Transverse colon (tissue), 4 donors: ENCODE measurements at regions of chr12 and their contacts with region 1.

Region 1: GRCh38 chr12:9079883-9080675 is 35.6 kb downstream of the A2M start:
- DNase-seq: no peak
- H3K4me3 ChIP-seq: no peak overlapping the region
- H3K27ac ChIP-seq: no peak overlapping the region
- H3K4me1 ChIP-seq: no peaks in the 10 kb centered on the region
- H3K27me3 ChIP-seq: no peaks in the 10 kb centered on the region
- CTCF ChIP-seq: no peak
- EP300 ChIP-seq: no peak
- POLR2A ChIP-seq: no peak

Region 2: DNA sequence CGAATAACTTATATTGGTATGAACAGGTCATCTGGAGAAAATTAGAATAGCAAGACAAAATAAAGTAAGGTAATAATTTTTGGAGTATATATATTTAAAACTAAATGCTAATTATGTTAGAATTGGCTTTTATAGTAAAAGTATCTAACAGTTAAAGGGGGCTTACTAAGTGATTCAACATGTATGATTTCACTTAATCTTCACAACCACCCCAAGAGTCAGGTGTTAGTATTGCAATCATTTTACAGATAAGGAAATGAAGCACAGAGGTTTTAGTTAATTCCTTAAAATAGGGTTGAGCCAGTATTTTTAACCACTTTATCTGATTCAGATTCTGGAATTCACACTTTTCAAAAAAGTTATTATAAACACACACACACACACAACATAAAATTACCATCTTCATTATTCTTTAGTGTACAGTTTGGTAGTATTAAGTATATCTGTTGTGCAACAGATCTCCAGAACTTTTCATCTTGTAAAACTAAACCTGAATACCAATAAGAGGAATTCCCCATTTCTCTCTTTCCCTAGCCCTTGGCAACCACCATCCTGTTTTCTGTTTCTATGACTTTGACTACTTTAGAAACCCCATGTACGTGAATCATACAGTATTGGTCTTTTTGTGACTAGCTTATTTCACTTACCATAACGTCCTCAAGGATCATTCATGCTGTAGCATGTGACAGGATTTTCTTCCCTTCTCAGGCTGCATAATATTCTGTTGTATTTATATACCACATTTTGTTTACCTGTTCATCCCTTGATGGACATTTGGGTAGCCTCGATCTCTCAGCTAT is 23.2 kb after region 1 on chr12:
- in situ Hi-C with region 1: no loop called
- intact Hi-C with region 1: loop called (anchors 1 kb)
- DNase-seq: no peak
- H3K4me3 ChIP-seq: no peak overlapping the region
- H3K27ac ChIP-seq: no peak overlapping the region
- H3K4me1 ChIP-seq: no peaks in the 10 kb centered on the region
- H3K27me3 ChIP-seq: no peaks in the 10 kb centered on the region
- CTCF ChIP-seq: no peak
- EP300 ChIP-seq: no peak
- POLR2A ChIP-seq: no peak

Region 3: GRCh38 chr12:9144730-9145106 is 64.6 kb after region 1 on chr12:
- in situ Hi-C with region 1: no loop called
- intact Hi-C with region 1: no loop called
- DNase-seq: no peak
- H3K4me3 ChIP-seq: no peak overlapping the region
- H3K27ac ChIP-seq: no peak overlapping the region
- H3K4me1 ChIP-seq: no peaks in the 10 kb centered on the region
- H3K27me3 ChIP-seq: no peaks in the 10 kb centered on the region
- CTCF ChIP-seq: no peak
- EP300 ChIP-seq: no peak
- POLR2A ChIP-seq: no peak

Region 4: GRCh38 chr12:10160659-10161385 is 1080.7 kb after region 1 on chr12:
- in situ Hi-C with region 1: no loop called
- intact Hi-C with region 1: loop called (anchors 5 kb)
- DNase-seq: no peak
- H3K4me3 ChIP-seq: no peak overlapping the region
- H3K27ac ChIP-seq: no peak overlapping the region
- H3K4me1 ChIP-seq: no peaks in the 10 kb centered on the region
- H3K27me3 ChIP-seq: no peaks in the 10 kb centered on the region
- CTCF ChIP-seq: no peak
- EP300 ChIP-seq: no peak
- POLR2A ChIP-seq: no peak